ENCODE measurements at regions of chr1 and their contacts with region 1.

Region 1: DNA sequence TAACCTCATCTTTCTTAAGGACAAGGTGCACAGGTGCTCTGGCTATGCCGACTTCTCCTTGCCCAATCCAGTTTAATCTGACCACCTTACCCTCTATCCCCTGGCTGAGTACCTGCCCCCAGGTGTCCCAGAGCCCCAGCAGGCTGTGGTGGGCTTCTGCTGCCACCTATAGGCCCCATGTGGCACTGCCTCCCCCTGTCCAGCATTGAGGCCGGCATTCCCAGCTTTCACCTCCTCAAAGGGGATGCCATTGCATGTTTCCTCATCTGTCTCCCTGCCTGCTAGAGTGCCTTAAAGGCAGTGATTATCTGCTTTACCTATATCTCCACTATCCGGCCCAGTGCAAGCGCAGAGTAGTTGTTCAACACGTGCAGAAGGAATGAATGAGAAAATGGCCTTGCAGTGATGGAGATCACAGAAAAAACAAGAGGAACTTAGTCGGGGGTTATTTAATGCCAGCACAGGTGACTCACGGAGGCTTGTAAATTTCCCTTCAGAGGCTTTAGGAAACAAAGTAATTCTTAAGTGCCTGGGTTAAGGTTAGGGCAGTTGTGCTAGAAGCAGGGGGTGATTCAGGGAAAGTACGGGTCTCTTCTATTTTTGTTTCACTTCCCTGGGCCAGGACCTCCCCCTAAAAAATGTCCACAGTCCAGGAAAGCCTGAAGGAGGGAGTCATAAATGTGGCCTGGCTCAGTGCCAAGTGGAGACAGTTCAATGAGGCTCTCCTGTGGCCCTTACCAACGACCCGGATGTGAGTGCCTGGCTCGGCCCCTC is 131.8 kb upstream of the NGF start:
- DNase-seq: no peak
- H3K4me3 ChIP-seq: no peak overlapping the region
- H3K27me3 ChIP-seq: no peaks in the 10 kb centered on the region
- CTCF ChIP-seq: peak; percentile 98

Region 2: DNA sequence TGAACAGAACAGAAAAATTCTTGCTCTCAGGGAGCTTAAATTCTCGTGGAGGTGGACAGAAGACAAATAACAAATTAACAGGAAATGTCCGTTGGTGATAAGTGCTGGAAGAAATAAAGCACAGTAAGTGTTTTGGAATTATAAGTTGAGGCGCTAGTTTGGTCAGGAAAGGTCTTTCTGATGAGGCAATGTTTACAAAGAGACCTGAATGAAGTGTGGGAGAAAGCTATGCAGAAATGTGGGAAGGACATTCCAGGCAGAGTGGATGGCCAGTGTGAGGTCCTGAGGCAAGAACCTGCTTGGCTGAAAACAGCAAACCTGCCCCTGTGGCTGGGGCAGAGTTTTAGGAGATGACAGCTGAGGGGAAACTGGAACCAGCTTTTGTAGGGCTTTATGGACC is 155.1 kb before region 1 on chr1:
- CTCF ChIA-PET with region 1: interaction called, 10 read pairs
- POLR2A ChIA-PET with region 1: no interaction called
- DNase-seq: peak; percentile 65
- H3K4me3 ChIP-seq: no peak overlapping the region
- H3K27me3 ChIP-seq: no peaks in the 10 kb centered on the region
- CTCF ChIP-seq: no peak

Region 3: GRCh38 chr1:115323376-115324004 is 146.4 kb before region 1 on chr1:
- CTCF ChIA-PET with region 1: interaction called, 10 read pairs
- POLR2A ChIA-PET with region 1: no interaction called
- DNase-seq: no peak
- H3K4me3 ChIP-seq: no peak overlapping the region
- H3K27me3 ChIP-seq: no peaks in the 10 kb centered on the region
- CTCF ChIP-seq: no peak

Region 4: GRCh38 chr1:115337633-115338456 is 132.0 kb before region 1 on chr1 and contains the start of gene NGF:
- CTCF ChIA-PET with region 1: interaction called, 5 read pairs
- POLR2A ChIA-PET with region 1: interaction called, 11 read pairs
- DNase-seq: no peak
- H3K4me3 ChIP-seq: peak within 1 kb of the TSS; percentile 97
- H3K27me3 ChIP-seq: no peaks in the 10 kb centered on the region
- CTCF ChIP-seq: no peak; the same call in 1 of the 2 replicates
- polyA plus RNA-seq, gene NGF: 42.4 and 49.6 TPM in 2 replicates

Region 5: DNA sequence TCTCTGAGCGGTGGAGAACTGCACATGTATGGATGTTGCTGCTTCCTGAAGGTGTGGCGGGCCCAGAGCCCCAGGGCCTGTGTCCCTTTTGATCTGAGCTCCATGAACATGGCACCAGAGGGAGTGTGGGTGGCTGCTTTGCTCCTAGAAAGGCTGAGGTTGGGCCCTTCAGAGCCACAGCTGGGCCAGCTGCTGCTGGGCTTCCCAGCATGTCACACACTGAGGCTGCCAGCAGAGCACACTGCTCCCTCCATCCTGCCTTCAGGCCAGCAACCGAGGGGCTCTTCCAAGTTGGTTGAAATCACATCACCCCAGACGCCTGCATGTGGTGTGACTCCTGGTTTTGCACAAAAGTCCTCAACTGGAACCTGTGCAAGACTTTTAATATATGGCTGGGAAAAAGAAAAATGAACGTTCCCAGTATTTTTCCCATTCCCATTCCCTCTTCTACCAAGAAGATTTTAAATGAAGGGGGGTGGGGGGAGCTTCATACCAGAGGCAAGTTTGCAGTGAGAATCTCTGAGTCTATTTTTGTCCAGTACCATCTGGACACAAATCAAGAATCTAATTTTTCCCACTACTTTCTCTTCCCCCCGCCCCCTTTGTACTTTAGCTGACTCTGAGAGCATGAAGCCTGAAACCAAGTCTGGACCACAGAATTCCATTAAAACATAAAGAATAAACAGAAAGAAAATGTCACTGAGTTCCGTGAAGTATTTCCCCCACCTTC is 105.7 kb before region 1 on chr1:
- CTCF ChIA-PET with region 1: interaction called, 10 read pairs
- POLR2A ChIA-PET with region 1: no interaction called
- DNase-seq: peak; percentile 84
- H3K4me3 ChIP-seq: no peak overlapping the region
- H3K27me3 ChIP-seq: no peaks in the 10 kb centered on the region
- CTCF ChIP-seq: peak; percentile 30; the same call in 1 of the 2 replicates

Region 6: GRCh38 chr1:115595279-115596079 is 125.6 kb after region 1 on chr1:
- CTCF ChIA-PET with region 1: interaction called, 32 read pairs
- POLR2A ChIA-PET with region 1: no interaction called
- DNase-seq: peak; percentile 63
- H3K4me3 ChIP-seq: no peak overlapping the region
- H3K27me3 ChIP-seq: no peaks in the 10 kb centered on the region
- CTCF ChIP-seq: peak; percentile 96